ENCODE measurements at regions of chr12 and their contacts with region 1.

Region 1: GRCh38 chr12:88658009-88658408 is 77.7 kb upstream of the KITLG start:
- DNase-seq: peak; percentile 85
- H3K4me3 ChIP-seq: no peak overlapping the region
- H3K27ac ChIP-seq: peak overlapping the region; percentile 91
- H3K4me1 ChIP-seq: peaks cover 18% of the 10 kb centered on the region
- H3K27me3 ChIP-seq: no peaks in the 10 kb centered on the region
- CTCF ChIP-seq: no peak

Region 2: DNA sequence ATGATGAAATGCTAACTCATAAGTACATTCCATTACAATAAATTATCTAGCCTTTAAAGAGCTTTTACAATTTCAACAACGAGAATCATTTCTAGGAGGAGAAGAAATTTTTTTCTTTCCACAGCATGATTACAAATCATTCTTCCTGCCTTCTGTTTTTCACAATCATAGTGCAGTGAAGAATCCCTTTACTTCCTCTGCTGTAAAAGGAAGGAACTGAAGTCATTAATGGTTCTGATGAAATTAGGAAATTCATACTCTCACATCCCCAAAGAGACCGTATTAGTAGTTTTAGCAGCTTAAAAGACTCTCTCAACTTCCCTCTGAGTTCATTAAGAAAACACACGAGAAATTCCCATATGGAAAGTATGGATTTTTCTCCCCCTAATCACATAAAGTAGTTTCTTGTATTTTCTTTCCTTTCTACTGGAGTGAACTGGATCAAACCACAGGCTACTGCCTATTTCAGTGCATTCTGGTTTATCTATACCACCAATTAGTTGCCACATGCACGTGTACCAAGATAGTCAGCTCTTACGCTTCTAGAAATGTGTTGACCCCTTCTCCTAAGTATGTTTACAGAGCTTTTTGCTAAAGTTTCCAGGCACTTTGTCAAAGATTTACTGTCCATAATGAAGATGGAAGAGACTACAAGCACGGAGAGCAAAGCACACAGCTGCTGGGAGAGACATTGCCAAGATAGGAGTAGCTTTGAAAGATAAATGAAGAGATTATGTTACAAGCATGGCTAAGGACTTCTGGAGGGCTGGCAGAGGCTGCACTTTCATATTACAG is 18.8 kb before region 1 on chr12:
- CTCF ChIA-PET with region 1: interaction called, 14 read pairs
- dilution Hi-C with region 1: no loop called
- in situ Hi-C with region 1: no loop called
- intact Hi-C with region 1: no loop called
- DNase-seq: no peak
- H3K4me3 ChIP-seq: no peak overlapping the region
- H3K27ac ChIP-seq: no peak overlapping the region
- H3K4me1 ChIP-seq: no peaks in the 10 kb centered on the region
- H3K27me3 ChIP-seq: no peaks in the 10 kb centered on the region
- CTCF ChIP-seq: no peak

Region 3: DNA sequence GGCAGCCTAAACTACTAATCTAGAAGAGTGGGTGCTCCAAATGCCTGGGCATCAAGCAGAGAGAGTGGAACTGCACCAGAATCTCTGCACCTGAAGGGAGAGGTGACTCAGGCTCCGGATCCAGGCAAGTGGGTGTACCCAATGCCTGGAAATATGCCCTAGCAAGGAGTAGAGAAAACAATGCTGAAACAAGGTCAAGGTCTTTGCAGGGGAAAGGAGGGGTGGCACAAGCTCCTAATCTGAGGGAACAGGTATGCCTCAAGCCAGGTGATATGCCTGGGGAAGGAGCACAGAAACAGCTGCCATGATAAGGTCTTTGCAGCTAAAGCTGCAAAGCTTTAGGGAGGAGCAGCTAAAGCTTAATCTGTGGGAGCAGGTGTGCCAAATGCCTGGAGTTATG is 58.2 kb after region 1 on chr12:
- CTCF ChIA-PET with region 1: no interaction called
- dilution Hi-C with region 1: no loop called
- in situ Hi-C with region 1: no loop called
- intact Hi-C with region 1: no loop called
- DNase-seq: no peak
- H3K4me3 ChIP-seq: no peak overlapping the region
- H3K27ac ChIP-seq: no peak overlapping the region
- H3K4me1 ChIP-seq: peaks cover 6% of the 10 kb centered on the region
- H3K27me3 ChIP-seq: no peaks in the 10 kb centered on the region
- CTCF ChIP-seq: no peak

Measured in mammary epithelial cell (primary cell).